Pancreas (tissue), 10 donors: ENCODE measurements at regions of chr14 and their contacts with region 1.

Region 1: GRCh38 chr14:31084385-31084784 is 58.2 kb upstream of the STRN3 start:
- DNase-seq: no peak
- ATAC-seq: no peak
- H3K4me3 ChIP-seq: no peak overlapping the region
- H3K27ac ChIP-seq: no peak overlapping the region
- H3K4me1 ChIP-seq: no peaks in the 10 kb centered on the region
- H3K27me3 ChIP-seq: no peaks in the 10 kb centered on the region
- CTCF ChIP-seq: no peak

Region 2: GRCh38 chr14:30803185-30803584 is 281.2 kb before region 1 on chr14:
- intact Hi-C with region 1: no loop called
- DNase-seq: no peak
- ATAC-seq: no peak
- H3K4me3 ChIP-seq: no peak overlapping the region
- H3K27ac ChIP-seq: no peak overlapping the region
- H3K4me1 ChIP-seq: no peaks in the 10 kb centered on the region
- H3K27me3 ChIP-seq: no peaks in the 10 kb centered on the region
- CTCF ChIP-seq: no peak

Region 3: DNA sequence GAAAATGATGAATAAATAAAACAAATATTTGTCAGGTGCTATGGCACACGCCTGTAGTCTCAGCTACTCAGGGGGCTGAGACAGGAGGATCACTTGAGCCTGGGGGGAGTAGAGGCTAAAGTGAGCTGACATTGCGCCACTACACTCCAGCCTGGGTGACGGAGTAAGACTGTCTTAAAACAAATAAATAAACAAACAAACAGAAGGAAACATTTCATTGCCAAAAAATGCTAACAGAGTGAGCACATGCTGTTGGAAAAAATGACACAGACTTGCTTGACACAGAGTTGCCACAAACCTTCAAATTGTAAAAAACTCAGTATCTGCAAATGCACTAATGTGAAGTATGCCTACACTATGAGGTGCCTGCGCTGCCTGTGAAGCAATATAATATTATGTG is 109.8 kb before region 1 on chr14:
- intact Hi-C with region 1: loop called in 1 of 3 experiments (anchors 10 kb)
- DNase-seq: no peak
- ATAC-seq: peak in 2 of 4 donors; percentile 18 to 24
- H3K4me3 ChIP-seq: no peak overlapping the region
- H3K27ac ChIP-seq: no peak overlapping the region
- H3K4me1 ChIP-seq: peaks cover 6 to 20% (median 14%) of the 10 kb centered on the region in 3 donors
- H3K27me3 ChIP-seq: no peaks in the 10 kb centered on the region
- CTCF ChIP-seq: no peak

Region 4: DNA sequence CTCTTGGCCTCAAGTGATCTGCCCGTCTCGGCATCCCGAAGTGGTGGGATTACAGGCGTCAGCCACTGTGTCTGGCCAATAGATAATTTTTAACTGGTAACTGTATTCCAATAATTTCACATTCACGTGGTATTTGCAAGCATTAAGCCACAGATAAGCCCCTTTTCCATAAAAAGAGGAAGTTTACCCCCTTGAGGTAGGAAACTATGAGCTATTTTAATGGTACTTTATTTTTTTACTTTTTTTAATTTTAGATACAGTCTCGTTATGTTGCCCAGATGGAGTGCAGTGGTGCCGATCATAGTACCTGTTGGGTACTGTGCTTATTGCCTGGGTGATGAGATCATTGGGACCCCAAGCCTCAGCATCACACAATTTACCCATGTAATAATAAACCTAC is 101.9 kb before region 1 on chr14:
- intact Hi-C with region 1: loop called in 2 of 3 experiments (anchors 5 to 10 kb)
- DNase-seq: no peak
- ATAC-seq: no peak
- H3K4me3 ChIP-seq: no peak overlapping the region
- H3K27ac ChIP-seq: no peak overlapping the region
- H3K4me1 ChIP-seq: peaks cover 0 to 10% (median 0%) of the 10 kb centered on the region in 3 donors
- H3K27me3 ChIP-seq: no peaks in the 10 kb centered on the region
- CTCF ChIP-seq: no peak